ENCODE measurements at regions of chr12 and their contacts with region 1.

Region 1: DNA sequence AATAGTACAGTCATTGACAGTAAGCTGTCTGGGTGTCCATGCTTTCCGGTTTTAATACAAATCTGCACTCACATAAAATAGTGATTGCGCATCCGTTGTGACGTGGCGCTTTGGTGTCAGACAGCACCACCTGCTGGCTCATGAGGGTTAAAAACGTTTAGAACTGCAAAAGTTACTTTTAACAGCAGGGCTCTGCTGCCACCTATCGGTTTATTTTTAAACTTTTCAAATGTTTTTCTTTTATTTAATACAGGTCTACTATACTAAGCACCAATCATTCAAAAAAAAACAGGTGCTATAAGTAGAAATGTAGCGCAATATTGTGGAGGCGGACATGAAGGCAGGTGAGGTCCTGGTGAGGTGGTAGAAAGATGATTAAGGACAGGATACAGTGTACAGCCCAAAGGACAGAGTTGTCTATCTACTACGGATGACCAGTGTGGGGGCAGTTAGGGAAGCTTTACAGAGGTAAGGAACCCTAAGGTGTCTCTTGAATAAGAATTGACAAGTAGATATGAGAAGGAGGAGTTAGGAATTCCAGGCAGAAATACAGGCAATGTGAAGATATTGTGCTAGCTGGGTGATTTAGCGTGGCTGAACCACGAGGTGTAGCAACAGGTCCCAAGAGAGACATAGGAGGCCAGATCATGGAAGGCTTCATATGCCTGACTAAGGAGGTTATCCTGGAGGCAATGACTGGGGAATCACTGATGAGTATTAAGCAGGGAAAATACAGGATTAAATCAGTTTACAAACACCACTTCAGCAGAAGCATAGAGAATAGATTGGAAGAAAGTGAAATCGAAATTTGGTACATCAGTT is 91.5 kb upstream of the PRB2 start:
- DNase-seq: peak; percentile 44 to 85 (median 78)
- ATAC-seq: peak; percentile 99
- H3K4me3 ChIP-seq: no peak overlapping the region
- H3K4me3 Mint-ChIP-seq: peak overlapping the region in 3 of 10 donors; percentile 24 to 54 (median 28)
- H3K27ac ChIP-seq: no peak overlapping the region
- H3K27ac Mint-ChIP-seq: peak overlapping the region in 1 of 9 donors; percentile 37
- H3K4me1 ChIP-seq: no peaks in the 10 kb centered on the region
- H3K4me1 Mint-ChIP-seq: peaks cover 0 to 9% (median 7%) of the 10 kb centered on the region in 7 donors
- H3K27me3 ChIP-seq: no peaks in the 10 kb centered on the region
- H3K27me3 Mint-ChIP-seq: peaks cover 0 to 11% (median 0%) of the 10 kb centered on the region in 5 donors

Region 2: GRCh38 chr12:10235761-10236631 is 1250.8 kb before region 1 on chr12:
- CTCF ChIA-PET with region 1: no interaction called
- POLR2A ChIA-PET with region 1: no interaction called
- intact Hi-C with region 1: loop called (anchors 1 to 5 kb)
- DNase-seq: peak in 7 of 9 donors; percentile 16 to 46 (median 43)
- ATAC-seq: peak; percentile 84
- H3K4me3 ChIP-seq: no peak overlapping the region
- H3K4me3 Mint-ChIP-seq: no peak overlapping the region
- H3K27ac ChIP-seq: no peak overlapping the region
- H3K27ac Mint-ChIP-seq: no peak overlapping the region
- H3K4me1 ChIP-seq: peaks cover 0 to 16% of the 10 kb centered on the region in 2 donors
- H3K4me1 Mint-ChIP-seq: peaks cover 0 to 5% (median 0%) of the 10 kb centered on the region in 7 donors
- H3K27me3 ChIP-seq: no peaks in the 10 kb centered on the region
- H3K27me3 Mint-ChIP-seq: peaks cover 0 to 25% (median 0%) of the 10 kb centered on the region in 5 donors

Region 3: DNA sequence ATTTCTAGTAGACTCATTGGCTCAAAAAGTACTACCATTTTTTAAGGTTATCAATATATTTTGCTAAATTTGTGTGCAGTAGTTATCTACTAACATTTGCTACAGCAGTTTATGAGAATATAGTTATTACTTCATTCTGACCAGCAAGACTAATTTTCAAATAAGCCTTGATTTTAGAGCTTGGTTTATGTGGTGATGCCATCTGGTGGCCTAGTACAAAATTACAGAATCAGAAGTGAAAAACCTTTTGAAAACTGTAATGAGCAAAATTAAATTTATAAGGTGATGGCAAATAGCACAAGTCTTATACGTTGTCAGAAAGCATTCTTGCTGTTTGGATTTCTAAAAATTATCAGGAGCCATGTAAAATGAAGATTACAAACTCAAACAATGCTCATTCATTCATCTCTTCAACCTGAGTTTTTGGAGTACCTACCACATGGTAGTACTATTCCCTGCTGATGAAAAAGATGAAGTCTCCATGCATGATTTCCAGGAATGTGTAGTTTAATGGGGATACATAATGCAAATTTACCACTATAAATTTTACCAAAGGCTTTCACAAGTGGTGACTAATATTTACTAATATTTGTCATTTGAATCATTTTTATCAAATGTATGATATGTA is 924.4 kb before region 1 on chr12:
- CTCF ChIA-PET with region 1: no interaction called
- POLR2A ChIA-PET with region 1: no interaction called
- intact Hi-C with region 1: loop called in 1 of 2 experiments (anchors 1 kb)
- DNase-seq: peak in 7 of 9 donors; percentile 5 to 54 (median 40)
- ATAC-seq: peak; percentile 51
- H3K4me3 ChIP-seq: no peak overlapping the region
- H3K4me3 Mint-ChIP-seq: no peak overlapping the region
- H3K27ac ChIP-seq: no peak overlapping the region
- H3K27ac Mint-ChIP-seq: no peak overlapping the region
- H3K4me1 ChIP-seq: peaks cover 0 to 28% of the 10 kb centered on the region in 2 donors
- H3K4me1 Mint-ChIP-seq: peaks cover 0 to 16% (median 10%) of the 10 kb centered on the region in 7 donors
- H3K27me3 ChIP-seq: no peaks in the 10 kb centered on the region
- H3K27me3 Mint-ChIP-seq: peaks cover 7 to 40% (median 16%) of the 10 kb centered on the region in 5 donors

Region 4: GRCh38 chr12:10749700-10750384 is 737.0 kb before region 1 on chr12:
- CTCF ChIA-PET with region 1: no interaction called
- POLR2A ChIA-PET with region 1: no interaction called
- intact Hi-C with region 1: loop called (anchors 5 kb)
- DNase-seq: peak; percentile 22 to 79 (median 67)
- ATAC-seq: peak; percentile 100
- H3K4me3 ChIP-seq: peak overlapping the region; percentile 1
- H3K4me3 Mint-ChIP-seq: peak overlapping the region in 8 of 10 donors; percentile 15 to 76 (median 64)
- H3K27ac ChIP-seq: no peak overlapping the region
- H3K27ac Mint-ChIP-seq: peak overlapping the region in 4 of 9 donors; percentile 7 to 60 (median 34)
- H3K4me1 ChIP-seq: peaks cover 0 to 4% of the 10 kb centered on the region in 2 donors
- H3K4me1 Mint-ChIP-seq: peaks cover 0 to 24% (median 6%) of the 10 kb centered on the region in 7 donors
- H3K27me3 ChIP-seq: peaks cover 0 to 4% of the 10 kb centered on the region in 2 donors
- H3K27me3 Mint-ChIP-seq: peaks cover 32 to 57% (median 33%) of the 10 kb centered on the region in 5 donors

Region 5: GRCh38 chr12:10959804-10960203 is 527.0 kb before region 1 on chr12:
- CTCF ChIA-PET with region 1: no interaction called
- POLR2A ChIA-PET with region 1: no interaction called
- intact Hi-C with region 1: loop called in 1 of 2 experiments (anchors 1 kb)
- DNase-seq: no peak
- ATAC-seq: no peak
- H3K4me3 ChIP-seq: no peak overlapping the region
- H3K4me3 Mint-ChIP-seq: peak overlapping the region in 1 of 10 donors; percentile 4
- H3K27ac ChIP-seq: no peak overlapping the region
- H3K27ac Mint-ChIP-seq: peak overlapping the region in 2 of 9 donors; percentile 1 to 37
- H3K4me1 ChIP-seq: peaks cover 4 to 9% of the 10 kb centered on the region in 2 donors
- H3K4me1 Mint-ChIP-seq: peaks cover 19 to 41% (median 34%) of the 10 kb centered on the region in 7 donors
- H3K27me3 ChIP-seq: no peaks in the 10 kb centered on the region
- H3K27me3 Mint-ChIP-seq: no peaks in the 10 kb centered on the region

Region 6: DNA sequence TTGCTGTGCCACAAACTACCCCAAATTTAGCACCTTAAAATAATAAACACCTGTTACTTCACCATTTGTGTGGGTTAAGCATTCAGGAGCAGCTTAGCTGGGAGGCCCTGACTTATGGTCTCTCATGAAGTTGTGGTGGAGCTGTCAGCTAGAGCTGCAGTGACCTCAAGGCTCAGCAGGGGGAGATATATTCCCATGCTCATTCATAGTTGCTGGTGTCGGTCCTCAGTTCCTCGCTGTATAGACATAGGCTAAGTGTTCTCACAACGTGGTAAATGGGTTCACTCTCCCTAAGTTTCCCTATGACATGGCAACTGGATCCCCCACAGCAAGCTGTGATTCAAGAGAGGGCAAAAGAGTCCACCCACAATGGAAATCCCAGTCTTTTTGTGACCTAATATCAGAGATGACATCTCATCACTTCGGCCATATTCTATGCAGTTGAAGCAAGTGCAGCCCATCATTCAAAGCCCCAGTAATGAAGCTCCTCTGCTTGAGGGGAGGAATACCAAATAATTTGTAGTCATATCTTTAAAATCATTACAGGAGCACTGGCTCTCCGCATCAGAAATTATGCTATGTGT is 258.4 kb before region 1 on chr12:
- CTCF ChIA-PET with region 1: interaction called, 3 read pairs
- POLR2A ChIA-PET with region 1: no interaction called
- intact Hi-C with region 1: loop called in 1 of 2 experiments (anchors 1 kb)
- DNase-seq: peak in 7 of 9 donors; percentile 3 to 28 (median 19)
- ATAC-seq: no peak
- H3K4me3 ChIP-seq: no peak overlapping the region
- H3K4me3 Mint-ChIP-seq: no peak overlapping the region
- H3K27ac ChIP-seq: no peak overlapping the region
- H3K27ac Mint-ChIP-seq: no peak overlapping the region
- H3K4me1 ChIP-seq: no peaks in the 10 kb centered on the region
- H3K4me1 Mint-ChIP-seq: peaks cover 0 to 2% (median 0%) of the 10 kb centered on the region in 7 donors
- H3K27me3 ChIP-seq: no peaks in the 10 kb centered on the region
- H3K27me3 Mint-ChIP-seq: peaks cover 0 to 4% (median 0%) of the 10 kb centered on the region in 5 donors

Region 7: GRCh38 chr12:11264506-11264905 is 222.3 kb before region 1 on chr12:
- CTCF ChIA-PET with region 1: no interaction called
- POLR2A ChIA-PET with region 1: no interaction called
- intact Hi-C with region 1: no loop called
- DNase-seq: no peak
- ATAC-seq: no peak
- H3K4me3 ChIP-seq: no peak overlapping the region
- H3K4me3 Mint-ChIP-seq: no peak overlapping the region
- H3K27ac ChIP-seq: no peak overlapping the region
- H3K27ac Mint-ChIP-seq: no peak overlapping the region
- H3K4me1 ChIP-seq: no peaks in the 10 kb centered on the region
- H3K4me1 Mint-ChIP-seq: no peaks in the 10 kb centered on the region
- H3K27me3 ChIP-seq: no peaks in the 10 kb centered on the region
- H3K27me3 Mint-ChIP-seq: no peaks in the 10 kb centered on the region

Region 8: DNA sequence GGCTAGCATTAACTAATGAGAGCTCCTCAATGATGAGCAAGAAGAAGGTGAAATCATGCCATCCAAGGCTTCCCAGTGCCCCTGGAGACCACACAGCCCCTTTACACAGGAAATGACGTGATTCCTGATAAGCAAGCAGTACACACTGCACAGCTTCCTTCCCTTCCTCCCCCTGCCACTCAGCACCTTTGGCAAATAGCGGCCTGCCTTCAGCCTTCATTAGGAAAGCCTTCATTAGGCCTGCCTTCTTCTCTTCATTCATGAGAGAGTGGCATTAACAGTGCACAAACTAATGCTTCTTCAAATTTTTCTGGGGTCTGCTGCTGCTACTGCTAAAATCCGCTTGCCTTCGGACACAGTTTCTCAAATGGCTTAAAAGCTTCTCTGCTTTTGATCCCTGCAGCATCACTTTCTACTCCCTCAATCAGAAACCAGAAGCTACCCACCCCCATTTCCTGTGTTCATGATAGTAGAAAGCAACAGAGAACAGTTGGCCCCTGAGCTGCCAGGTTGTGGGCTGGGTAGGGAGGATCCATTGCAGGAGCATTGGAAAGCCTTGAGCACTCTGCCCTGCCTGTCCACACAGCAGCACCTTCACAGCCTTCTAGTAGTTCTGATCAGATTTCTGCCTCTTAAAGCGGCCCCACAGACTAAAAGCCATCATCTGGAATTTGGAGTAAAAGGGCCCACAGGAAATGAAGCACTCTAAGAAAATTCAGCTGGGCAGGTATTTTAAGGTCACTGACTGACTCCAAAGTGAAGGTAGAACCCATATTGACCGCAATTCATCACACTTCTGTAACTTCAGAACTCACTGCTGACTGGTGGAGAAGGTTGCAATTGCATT is 58.9 kb after region 1 on chr12:
- CTCF ChIA-PET with region 1: interaction called, 3 read pairs
- POLR2A ChIA-PET with region 1: interaction called, 3 read pairs
- intact Hi-C with region 1: loop called in 1 of 2 experiments (anchors 1 kb)
- DNase-seq: peak in 8 of 9 donors; percentile 50 to 87 (median 81)
- ATAC-seq: peak; percentile 87
- H3K4me3 ChIP-seq: peak overlapping the region; percentile 50
- H3K4me3 Mint-ChIP-seq: peak overlapping the region; percentile 74 to 84 (median 80)
- H3K27ac ChIP-seq: peak overlapping the region; percentile 81
- H3K27ac Mint-ChIP-seq: peak overlapping the region; percentile 92 to 99 (median 96)
- H3K4me1 ChIP-seq: peaks cover 28 to 69% of the 10 kb centered on the region in 2 donors
- H3K4me1 Mint-ChIP-seq: peaks cover 31 to 88% (median 68%) of the 10 kb centered on the region in 7 donors
- H3K27me3 ChIP-seq: no peaks in the 10 kb centered on the region
- H3K27me3 Mint-ChIP-seq: peaks cover 0 to 5% (median 0%) of the 10 kb centered on the region in 5 donors